ENCODE measurements at regions of chr13 and their contacts with region 1.

Region 1: GRCh38 chr13:49936085-49936940 is at the start of gene SPRYD7:
- DNase-seq: peak; percentile 99
- H3K4me3 ChIP-seq: peak within 1 kb of the TSS; percentile 90 to 97 (median 94)
- H3K27ac ChIP-seq: peak within 1 kb of the TSS; percentile 90 to 94 (median 92)
- H3K4me1 ChIP-seq: peaks cover 21 to 76% (median 71%) of the 10 kb centered on the region in 4 donors
- H3K27me3 ChIP-seq: no peaks in the 10 kb centered on the region
- CTCF ChIP-seq: peak; percentile 89 to 98 (median 95)
- EP300 ChIP-seq: no peak
- POLR2A ChIP-seq: peak; percentile 65
- total RNA-seq, gene SPRYD7: 10.9 to 18.8 (median 15.0) TPM

Region 2: GRCh38 chr13:49869519-49869918 is 66.8 kb before region 1 on chr13:
- intact Hi-C with region 1: loop called (anchors 5 kb)
- DNase-seq: no peak
- H3K4me3 ChIP-seq: no peak overlapping the region
- H3K27ac ChIP-seq: no peak overlapping the region
- H3K4me1 ChIP-seq: no peaks in the 10 kb centered on the region
- H3K27me3 ChIP-seq: no peaks in the 10 kb centered on the region
- CTCF ChIP-seq: peak in 1 of 3 experiments; percentile 32
- EP300 ChIP-seq: no peak
- POLR2A ChIP-seq: no peak

Measured in esophagus muscularis mucosa (tissue), 4 donors.